ENCODE measurements at regions of chr2 and their contacts with region 1.

Region 1: GRCh38 chr2:19901442-19902215 is at the start of gene TTC32:
- DNase-seq: peak; percentile 98
- H3K4me3 Mint-ChIP-seq: peak within 1 kb of the TSS; percentile 94
- H3K27ac Mint-ChIP-seq: peak within 1 kb of the TSS; percentile 91
- H3K4me1 Mint-ChIP-seq: peaks cover 34% of the 10 kb centered on the region
- H3K27me3 Mint-ChIP-seq: peaks cover 13% of the 10 kb centered on the region
- total RNA-seq, gene TTC32: 10.5 and 11.0 TPM in 2 replicates

Region 2: GRCh38 chr2:18560031-18560796 is 1341.4 kb before region 1 on chr2 and contains the start of gene RDH14:
- intact Hi-C with region 1: loop called (anchors 1 kb)
- DNase-seq: peak; percentile 97
- H3K4me3 Mint-ChIP-seq: peak within 1 kb of the TSS; percentile 94
- H3K27ac Mint-ChIP-seq: peak within 1 kb of the TSS; percentile 96
- H3K4me1 Mint-ChIP-seq: peaks cover 29% of the 10 kb centered on the region
- H3K27me3 Mint-ChIP-seq: no peaks in the 10 kb centered on the region
- total RNA-seq, gene RDH14: 14.2 and 15.1 TPM in 2 replicates

Region 3: GRCh38 chr2:19868705-19869580 is 32.7 kb before region 1 on chr2:
- intact Hi-C with region 1: loop called (anchors 2 kb)
- DNase-seq: peak; percentile 87
- H3K4me3 Mint-ChIP-seq: peak overlapping the region; percentile 91
- H3K27ac Mint-ChIP-seq: peak overlapping the region; percentile 81
- H3K4me1 Mint-ChIP-seq: peaks cover 34% of the 10 kb centered on the region
- H3K27me3 Mint-ChIP-seq: no peaks in the 10 kb centered on the region

Region 4: GRCh38 chr2:19887510-19887909 is 14.1 kb before region 1 on chr2:
- intact Hi-C with region 1: no loop called
- DNase-seq: no peak
- H3K4me3 Mint-ChIP-seq: no peak overlapping the region
- H3K27ac Mint-ChIP-seq: no peak overlapping the region
- H3K4me1 Mint-ChIP-seq: peaks cover 11% of the 10 kb centered on the region
- H3K27me3 Mint-ChIP-seq: no peaks in the 10 kb centered on the region

Region 5: GRCh38 chr2:20051532-20052228 is 150.1 kb after region 1 on chr2 and contains the start of gene LAPTM4A:
- intact Hi-C with region 1: loop called (anchors 1 kb)
- DNase-seq: peak; percentile 99
- H3K4me3 Mint-ChIP-seq: no peak within 1 kb of the TSS
- H3K27ac Mint-ChIP-seq: no peak within 1 kb of the TSS
- H3K4me1 Mint-ChIP-seq: peaks cover 23% of the 10 kb centered on the region
- H3K27me3 Mint-ChIP-seq: peaks cover 22% of the 10 kb centered on the region
- total RNA-seq, gene LAPTM4A: 24.3 and 25.3 TPM in 2 replicates

Region 6: GRCh38 chr2:20365249-20365817 is 463.7 kb after region 1 on chr2:
- intact Hi-C with region 1: loop called (anchors 2 kb)
- DNase-seq: peak; percentile 88
- H3K4me3 Mint-ChIP-seq: peak overlapping the region; percentile 29
- H3K27ac Mint-ChIP-seq: peak overlapping the region; percentile 74
- H3K4me1 Mint-ChIP-seq: peaks cover 27% of the 10 kb centered on the region
- H3K27me3 Mint-ChIP-seq: no peaks in the 10 kb centered on the region

Region 7: DNA sequence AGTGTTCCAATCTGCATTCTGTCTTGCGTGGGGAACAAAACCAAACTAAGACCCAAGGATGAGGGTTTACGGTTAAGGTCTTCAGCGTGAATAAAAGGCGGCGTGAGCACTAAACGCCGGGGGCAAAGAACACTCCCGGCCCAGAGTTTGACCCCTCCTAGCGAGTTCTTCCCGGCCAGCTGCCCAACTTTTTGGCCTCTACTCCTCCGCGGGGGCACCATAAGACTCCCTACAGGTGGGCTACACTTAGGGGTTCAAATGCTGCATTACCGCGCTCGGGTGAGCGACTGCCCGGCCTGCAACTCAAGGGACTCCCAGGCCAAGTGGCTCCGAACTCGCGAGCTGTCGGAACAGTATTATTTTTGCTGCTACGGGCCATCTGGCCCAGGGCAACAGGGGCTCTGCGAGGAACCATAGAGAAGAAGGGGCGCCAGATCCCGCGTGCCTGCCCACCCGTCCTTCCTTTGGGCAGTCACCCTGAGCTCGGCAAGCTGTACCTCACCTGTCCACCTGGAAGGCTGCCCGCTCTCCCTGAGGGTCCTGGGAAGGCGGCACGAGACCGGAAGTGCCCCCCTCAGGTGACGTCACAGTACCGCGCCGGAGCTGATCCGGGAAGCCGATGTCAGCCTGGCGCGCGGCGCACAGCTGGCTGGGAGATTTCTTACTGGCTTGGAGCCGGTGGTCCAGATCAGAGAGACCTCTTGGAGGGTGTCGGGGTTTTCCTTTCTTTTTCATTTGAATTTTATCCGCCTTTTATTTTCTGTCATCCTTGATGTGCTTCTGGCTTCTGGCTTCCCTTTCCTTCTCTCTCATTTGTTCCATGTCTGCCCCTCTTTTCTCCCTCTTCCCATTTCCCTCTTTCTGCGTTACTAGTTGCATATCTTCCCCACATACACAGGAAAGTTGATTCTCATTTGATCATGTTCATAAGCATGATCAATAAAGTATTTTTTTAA is 921.2 kb after region 1 on chr2 and contains the start of gene LDAH:
- intact Hi-C with region 1: loop called (anchors 5 kb)
- DNase-seq: peak; percentile 95
- H3K4me3 Mint-ChIP-seq: peak within 1 kb of the TSS; percentile 96
- H3K27ac Mint-ChIP-seq: peak within 1 kb of the TSS; percentile 99
- H3K4me1 Mint-ChIP-seq: peaks cover 25% of the 10 kb centered on the region
- H3K27me3 Mint-ChIP-seq: peaks cover 4% of the 10 kb centered on the region
- total RNA-seq, gene LDAH: 31.6 and 37.7 TPM in 2 replicates

Measured in activated CD4-positive, alpha-beta T cell treated with anti-CD3 and anti-CD28 coated beads, Interleukin-2, amount 10 ng/mL, durations not matched to agents 24 days and 14 days (primary cell).